ENCODE measurements at regions of chr11 and their contacts with region 1.

Region 1: DNA sequence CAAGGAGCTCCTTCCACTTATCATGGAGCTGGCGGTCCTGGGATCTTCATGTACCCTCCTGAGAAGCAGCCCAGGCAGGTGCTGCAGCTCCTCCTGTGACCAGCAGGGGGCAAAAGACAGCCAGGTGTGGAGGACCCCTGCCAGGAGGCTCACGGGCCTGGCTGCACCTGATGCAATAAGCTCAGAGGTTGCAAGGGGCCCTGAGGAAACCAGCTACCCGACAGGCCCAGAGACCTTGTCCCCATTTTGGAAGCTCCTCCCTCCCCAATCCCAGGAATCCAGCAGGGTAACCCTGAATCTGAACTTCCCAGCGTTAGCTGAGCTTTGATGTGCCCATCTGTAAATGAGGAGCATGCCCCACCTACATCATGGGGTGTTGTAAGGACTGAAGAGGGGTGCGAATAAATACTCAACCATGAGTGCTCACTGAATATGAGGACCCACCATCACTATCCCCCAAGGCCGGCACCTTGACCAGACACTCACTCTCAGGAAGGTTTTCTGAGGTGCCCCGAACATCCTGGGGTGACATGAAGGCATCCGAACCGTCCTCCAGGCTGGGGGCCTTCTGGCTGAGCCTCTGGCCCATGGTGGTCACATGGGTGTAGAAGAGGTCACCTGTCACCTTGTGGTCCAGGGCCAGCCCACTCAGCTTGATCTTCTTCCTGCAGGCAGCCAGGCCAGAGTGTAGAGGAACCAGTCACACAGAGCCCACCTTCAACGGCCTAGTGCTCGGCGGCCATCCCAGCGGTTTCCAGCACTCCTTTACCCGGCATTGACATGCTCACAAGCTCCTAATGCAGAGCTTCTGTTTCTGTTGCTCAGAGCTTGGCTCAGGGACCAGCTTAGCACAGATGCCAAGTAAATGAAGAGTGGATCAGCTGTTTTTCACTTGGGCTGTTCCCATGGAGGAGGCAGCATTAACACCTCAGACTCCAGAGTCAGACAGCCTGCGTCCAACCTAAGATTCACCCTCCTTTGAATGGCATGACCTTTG is 21.7 kb downstream of the SLC43A1 start:
- DNase-seq: peak; percentile 64 to 74 (median 67)
- H3K4me3 ChIP-seq: no peak overlapping the region
- H3K4me3 Mint-ChIP-seq: no peak overlapping the region
- H3K27ac ChIP-seq: no peak overlapping the region
- H3K27ac Mint-ChIP-seq: no peak overlapping the region
- H3K4me1 ChIP-seq: no peaks in the 10 kb centered on the region
- H3K4me1 Mint-ChIP-seq: no peaks in the 10 kb centered on the region
- H3K27me3 ChIP-seq: no peaks in the 10 kb centered on the region
- H3K27me3 Mint-ChIP-seq: no peaks in the 10 kb centered on the region

Region 2: GRCh38 chr11:57390535-57390934 is 103.3 kb before region 1 on chr11 and contains the start of gene PRG2:
- CTCF ChIA-PET with region 1: no interaction called
- POLR2A ChIA-PET with region 1: no interaction called
- intact Hi-C with region 1: no loop called
- DNase-seq: no peak
- H3K4me3 ChIP-seq: no peak within 1 kb of the TSS
- H3K4me3 Mint-ChIP-seq: no peak within 1 kb of the TSS
- H3K27ac ChIP-seq: no peak within 1 kb of the TSS
- H3K27ac Mint-ChIP-seq: peak within 1 kb of the TSS in 1 of 7 donors; percentile 14
- H3K4me1 ChIP-seq: no peaks in the 10 kb centered on the region
- H3K4me1 Mint-ChIP-seq: no peaks in the 10 kb centered on the region
- H3K27me3 ChIP-seq: no peaks in the 10 kb centered on the region
- H3K27me3 Mint-ChIP-seq: peaks cover 0 to 2% of the 10 kb centered on the region in 2 donors
- total RNA-seq, gene PRG2: 0.25 TPM in 1 of 2 experiments, not detected in the other

Region 3: DNA sequence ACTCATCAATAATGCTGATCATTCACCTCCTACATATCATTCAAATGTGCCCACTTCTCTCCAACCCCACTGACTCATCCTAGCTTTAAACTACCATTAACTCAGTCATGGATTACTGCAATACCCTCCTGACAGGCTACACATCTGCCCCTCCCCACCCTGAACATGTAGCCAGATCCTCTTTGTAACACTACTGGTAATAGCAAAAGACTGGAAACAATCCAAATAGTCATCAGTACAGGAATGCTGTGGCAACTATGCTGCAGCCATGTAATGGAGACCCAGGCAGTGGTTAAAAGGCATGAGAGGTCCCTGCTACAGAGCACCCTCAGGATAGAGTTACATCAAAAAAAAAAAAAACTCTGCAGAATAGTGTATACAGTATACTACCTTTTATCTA is 83.5 kb before region 1 on chr11:
- CTCF ChIA-PET with region 1: no interaction called
- POLR2A ChIA-PET with region 1: no interaction called
- intact Hi-C with region 1: no loop called
- DNase-seq: no peak
- H3K4me3 ChIP-seq: no peak overlapping the region
- H3K4me3 Mint-ChIP-seq: no peak overlapping the region
- H3K27ac ChIP-seq: no peak overlapping the region
- H3K27ac Mint-ChIP-seq: no peak overlapping the region
- H3K4me1 ChIP-seq: peaks cover 8% of the 10 kb centered on the region
- H3K4me1 Mint-ChIP-seq: peaks cover 9 to 17% (median 10%) of the 10 kb centered on the region in 4 donors
- H3K27me3 ChIP-seq: no peaks in the 10 kb centered on the region
- H3K27me3 Mint-ChIP-seq: no peaks in the 10 kb centered on the region

Region 4: DNA sequence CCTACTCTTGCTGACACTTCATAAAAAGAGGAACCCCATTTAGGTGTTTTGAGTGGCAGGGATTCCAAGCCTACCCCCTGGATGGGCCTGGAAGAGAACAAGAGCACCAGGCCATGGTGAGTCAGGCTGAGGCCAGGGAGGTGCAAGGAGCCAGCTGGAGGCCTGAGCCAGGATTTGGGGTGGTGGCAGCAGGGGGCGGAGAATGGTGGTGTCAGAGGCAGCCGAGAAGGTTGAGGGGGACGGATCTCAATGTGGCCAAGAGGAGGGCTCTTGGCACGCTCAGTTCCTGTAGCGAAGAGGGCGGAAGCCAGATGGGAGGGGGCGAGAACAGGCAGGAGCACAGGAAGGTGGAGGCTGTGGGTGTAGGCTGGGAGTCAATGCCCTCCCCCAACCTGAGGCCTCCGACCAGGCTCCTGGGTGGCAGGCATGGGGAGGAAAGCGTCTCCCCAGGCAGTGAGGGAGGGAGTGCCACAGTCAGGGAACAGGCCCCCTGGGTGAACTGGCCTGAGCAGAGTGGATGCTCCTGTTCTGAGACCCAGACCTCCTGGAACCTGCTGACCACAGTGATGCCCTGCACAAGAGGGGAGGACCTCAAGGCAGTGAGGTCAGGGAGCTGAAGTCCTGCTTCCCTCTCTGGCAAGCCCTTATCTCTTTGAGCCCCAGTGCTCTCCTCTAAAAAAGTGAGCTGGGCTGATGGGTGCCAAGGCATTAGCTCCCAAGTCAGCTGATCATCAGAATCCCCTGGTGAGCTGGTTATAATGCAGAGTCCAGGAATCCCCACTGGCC is 19.6 kb before region 1 on chr11:
- CTCF ChIA-PET with region 1: interaction called, 39 read pairs
- POLR2A ChIA-PET with region 1: no interaction called
- intact Hi-C with region 1: no loop called
- DNase-seq: peak in 2 of 5 donors; percentile 17 to 18
- H3K4me3 ChIP-seq: no peak overlapping the region
- H3K4me3 Mint-ChIP-seq: peak overlapping the region in 7 of 8 donors; percentile 19 to 81 (median 66)
- H3K27ac ChIP-seq: no peak overlapping the region
- H3K27ac Mint-ChIP-seq: peak overlapping the region in 3 of 7 donors; percentile 44 to 81 (median 76)
- H3K4me1 ChIP-seq: peaks cover 24% of the 10 kb centered on the region
- H3K4me1 Mint-ChIP-seq: peaks cover 9 to 37% (median 19%) of the 10 kb centered on the region in 4 donors
- H3K27me3 ChIP-seq: peaks cover 5% of the 10 kb centered on the region
- H3K27me3 Mint-ChIP-seq: peaks cover 0 to 7% of the 10 kb centered on the region in 2 donors

Region 5: GRCh38 chr11:57508341-57509170 is 14.8 kb after region 1 on chr11:
- CTCF ChIA-PET with region 1: interaction called, 848 read pairs
- POLR2A ChIA-PET with region 1: no interaction called
- intact Hi-C with region 1: no loop called
- DNase-seq: no peak
- H3K4me3 ChIP-seq: no peak overlapping the region
- H3K4me3 Mint-ChIP-seq: no peak overlapping the region
- H3K27ac ChIP-seq: no peak overlapping the region
- H3K27ac Mint-ChIP-seq: no peak overlapping the region
- H3K4me1 ChIP-seq: peaks cover 9% of the 10 kb centered on the region
- H3K4me1 Mint-ChIP-seq: peaks cover 14 to 26% (median 18%) of the 10 kb centered on the region in 4 donors
- H3K27me3 ChIP-seq: no peaks in the 10 kb centered on the region
- H3K27me3 Mint-ChIP-seq: no peaks in the 10 kb centered on the region

Region 6: DNA sequence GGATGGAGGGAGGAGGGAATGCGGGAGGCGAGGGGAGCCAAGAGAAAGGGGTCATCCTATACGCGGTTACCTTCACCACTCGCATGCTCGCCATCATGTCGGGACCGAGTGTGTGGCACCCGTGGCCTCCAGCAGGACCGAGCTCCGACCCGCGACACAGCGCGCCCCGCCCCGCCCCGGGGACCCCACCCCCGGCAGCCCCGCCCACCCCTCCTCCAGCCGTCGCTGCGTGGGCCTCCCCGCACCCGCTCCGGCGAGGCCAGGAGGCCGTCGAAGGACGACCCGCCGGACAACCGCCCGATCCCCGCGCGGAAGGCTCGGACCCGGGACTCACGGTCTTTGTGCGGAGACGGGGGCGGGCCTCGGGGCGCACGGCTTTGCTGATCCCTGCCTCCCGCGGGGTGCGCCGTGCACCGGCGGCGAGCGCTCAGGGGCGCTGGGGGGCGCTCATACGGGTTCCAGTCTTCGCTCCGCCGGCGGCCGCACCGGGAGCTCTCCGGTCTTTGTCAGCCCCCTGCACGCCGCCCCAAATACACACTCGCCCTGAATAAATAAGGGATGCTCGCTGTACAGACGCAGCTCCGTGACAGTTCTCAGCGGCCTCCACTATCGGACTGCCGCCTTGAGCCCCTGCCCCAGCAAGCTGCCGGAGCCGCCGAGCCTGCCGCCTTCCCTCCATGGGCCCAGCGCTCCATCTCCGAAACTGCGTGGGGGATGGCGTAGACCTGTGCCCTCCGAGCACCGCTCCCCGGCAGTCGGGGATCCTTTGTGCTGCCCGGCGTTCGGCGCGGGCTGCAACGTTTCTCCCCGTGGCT is 73.9 kb after region 1 on chr11 and contains the start of gene UBE2L6:
- CTCF ChIA-PET with region 1: interaction called, 22 read pairs
- POLR2A ChIA-PET with region 1: no interaction called
- intact Hi-C with region 1: no loop called
- DNase-seq: peak; percentile 59 to 86 (median 66)
- H3K4me3 ChIP-seq: peak within 1 kb of the TSS; percentile 72 to 81
- H3K4me3 Mint-ChIP-seq: peak within 1 kb of the TSS; percentile 94 to 100 (median 99)
- H3K27ac ChIP-seq: peak within 1 kb of the TSS; percentile 93
- H3K27ac Mint-ChIP-seq: peak within 1 kb of the TSS; percentile 97 to 99 (median 98)
- H3K4me1 ChIP-seq: peaks cover 34% of the 10 kb centered on the region
- H3K4me1 Mint-ChIP-seq: peaks cover 27 to 65% (median 42%) of the 10 kb centered on the region in 4 donors
- H3K27me3 ChIP-seq: no peaks in the 10 kb centered on the region
- H3K27me3 Mint-ChIP-seq: no peaks in the 10 kb centered on the region
- total RNA-seq, gene UBE2L6: 79.7 to 82.9 TPM

Region 7: GRCh38 chr11:57649826-57650738 is 156.3 kb after region 1 on chr11 and contains the start of gene YPEL4:
- CTCF ChIA-PET with region 1: interaction called, 95 read pairs
- POLR2A ChIA-PET with region 1: no interaction called
- intact Hi-C with region 1: no loop called
- DNase-seq: peak; percentile 69 to 89 (median 74)
- H3K4me3 ChIP-seq: peak within 1 kb of the TSS; percentile 37 to 55
- H3K4me3 Mint-ChIP-seq: peak within 1 kb of the TSS; percentile 83 to 94 (median 86)
- H3K27ac ChIP-seq: peak within 1 kb of the TSS; percentile 10
- H3K27ac Mint-ChIP-seq: peak within 1 kb of the TSS; percentile 92 to 99 (median 95)
- H3K4me1 ChIP-seq: peaks cover 18% of the 10 kb centered on the region
- H3K4me1 Mint-ChIP-seq: peaks cover 15 to 59% (median 31%) of the 10 kb centered on the region in 4 donors
- H3K27me3 ChIP-seq: peaks cover 37% of the 10 kb centered on the region
- H3K27me3 Mint-ChIP-seq: peaks cover 25 to 39% of the 10 kb centered on the region in 2 donors
- total RNA-seq, gene YPEL4: 11.8 to 12.6 TPM

Region 8: GRCh38 chr11:57729479-57729878 is 235.7 kb after region 1 on chr11:
- CTCF ChIA-PET with region 1: no interaction called
- POLR2A ChIA-PET with region 1: no interaction called
- intact Hi-C with region 1: no loop called
- DNase-seq: no peak
- H3K4me3 ChIP-seq: no peak overlapping the region
- H3K4me3 Mint-ChIP-seq: no peak overlapping the region
- H3K27ac ChIP-seq: no peak overlapping the region
- H3K27ac Mint-ChIP-seq: no peak overlapping the region
- H3K4me1 ChIP-seq: no peaks in the 10 kb centered on the region
- H3K4me1 Mint-ChIP-seq: peaks cover 0 to 16% (median 6%) of the 10 kb centered on the region in 4 donors
- H3K27me3 ChIP-seq: no peaks in the 10 kb centered on the region
- H3K27me3 Mint-ChIP-seq: no peaks in the 10 kb centered on the region

Region 9: GRCh38 chr11:58028687-58029411 is 535.0 kb after region 1 on chr11:
- CTCF ChIA-PET with region 1: no interaction called
- POLR2A ChIA-PET with region 1: no interaction called
- intact Hi-C with region 1: no loop called
- DNase-seq: no peak
- H3K4me3 ChIP-seq: no peak overlapping the region
- H3K4me3 Mint-ChIP-seq: no peak overlapping the region
- H3K27ac ChIP-seq: no peak overlapping the region
- H3K27ac Mint-ChIP-seq: no peak overlapping the region
- H3K4me1 ChIP-seq: no peaks in the 10 kb centered on the region
- H3K4me1 Mint-ChIP-seq: peaks cover 0 to 3% (median 0%) of the 10 kb centered on the region in 4 donors
- H3K27me3 ChIP-seq: no peaks in the 10 kb centered on the region
- H3K27me3 Mint-ChIP-seq: peaks cover 0 to 12% of the 10 kb centered on the region in 2 donors